Stomach (tissue), 19 donors: ENCODE measurements at regions of chr1 and their contacts with region 1.

Region 1: DNA sequence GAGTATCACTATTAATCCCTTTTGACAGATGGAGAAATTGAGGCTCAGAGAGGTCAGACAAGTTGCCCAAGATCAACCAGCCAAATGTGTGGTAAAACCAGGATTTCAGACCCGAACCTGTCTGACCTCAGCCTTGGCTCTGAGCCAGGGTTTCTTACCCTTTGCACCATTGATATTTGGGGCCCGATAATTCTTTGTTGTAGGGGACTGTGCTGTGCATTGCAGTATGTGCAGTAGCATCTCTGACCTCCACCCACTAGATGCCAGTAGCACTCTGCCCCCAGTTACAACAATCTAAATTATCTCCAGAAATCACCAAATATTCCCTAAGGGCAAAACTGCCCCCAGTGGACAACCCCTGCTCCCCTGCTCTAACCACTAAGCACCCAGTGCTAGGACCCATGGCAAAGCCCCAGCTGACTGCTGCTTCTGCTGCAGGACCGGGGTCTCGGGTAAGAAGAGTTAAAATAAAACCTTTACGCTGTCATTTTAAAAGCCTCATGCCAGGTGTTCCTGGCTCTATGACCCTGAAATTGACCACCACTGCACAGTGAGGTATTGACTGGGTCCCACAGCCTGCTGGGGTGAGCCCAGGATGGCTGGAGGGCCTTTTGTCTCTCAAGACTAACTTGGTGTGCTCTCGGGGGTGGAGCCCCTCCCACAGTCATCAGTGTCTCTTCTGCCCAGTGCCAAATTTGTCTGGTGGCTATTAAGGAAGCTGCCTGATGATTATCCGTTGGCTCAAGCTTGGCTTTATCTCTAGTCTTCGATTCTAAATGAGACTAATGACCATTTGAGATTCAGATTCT is 5.6 kb upstream of the MAN1C1 start:
- DNase-seq: no peak
- H3K4me3 ChIP-seq: no peak overlapping the region
- H3K27ac ChIP-seq: no peak overlapping the region
- H3K4me1 ChIP-seq: peaks cover 13 to 46% (median 30%) of the 10 kb centered on the region in 4 donors
- H3K27me3 ChIP-seq: no peaks in the 10 kb centered on the region
- CTCF ChIP-seq: peak in 1 of 7 experiments; percentile 6
- EP300 ChIP-seq: no peak
- POLR2A ChIP-seq: no peak

Region 2: DNA sequence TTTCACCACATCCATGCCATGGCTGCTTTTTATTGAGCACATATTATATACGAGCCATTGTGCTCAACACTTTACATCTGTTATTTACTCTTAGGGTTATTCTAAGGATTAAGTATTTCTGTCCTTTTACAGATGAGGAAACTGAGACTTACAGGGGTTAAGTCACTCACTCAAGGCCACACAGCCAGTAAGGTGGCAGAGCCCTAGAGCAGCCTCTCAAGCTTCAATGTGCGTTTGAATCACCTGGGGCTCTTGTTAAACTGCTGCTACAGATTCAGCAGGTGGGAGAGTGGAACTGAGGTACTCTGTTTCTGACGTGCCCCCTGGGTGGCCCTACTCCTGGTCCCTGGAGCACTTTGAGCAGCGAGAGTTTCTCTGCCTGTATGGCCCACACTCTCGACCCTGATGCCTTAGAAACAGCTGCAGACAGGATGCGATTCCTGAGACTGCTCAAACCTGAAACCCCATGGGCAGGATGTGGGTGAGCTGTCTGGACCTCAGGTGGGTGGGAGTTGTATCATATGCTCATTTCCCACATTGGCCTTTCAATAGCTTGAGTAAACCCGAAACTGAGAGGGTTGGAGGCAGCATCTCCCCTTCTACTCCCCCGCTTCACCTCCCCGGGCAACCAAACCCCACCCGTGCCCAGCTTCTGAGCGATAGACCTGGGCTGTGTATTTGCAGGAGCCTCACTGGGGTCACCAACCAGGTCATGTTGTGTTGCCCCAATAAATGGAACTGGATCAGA is 64.9 kb after region 1 on chr1:
- intact Hi-C with region 1: no loop called
- DNase-seq: peak; percentile 40 to 52
- H3K4me3 ChIP-seq: no peak overlapping the region
- H3K27ac ChIP-seq: no peak overlapping the region
- H3K4me1 ChIP-seq: peaks cover 0 to 19% (median 11%) of the 10 kb centered on the region in 4 donors
- H3K27me3 ChIP-seq: no peaks in the 10 kb centered on the region
- CTCF ChIP-seq: no peak
- EP300 ChIP-seq: no peak
- POLR2A ChIP-seq: no peak

Region 3: GRCh38 chr1:25805863-25806225 is 194.8 kb after region 1 on chr1:
- intact Hi-C with region 1: loop called (anchors 5 kb)
- DNase-seq: peak in 1 of 2 donors; percentile 61
- H3K4me3 ChIP-seq: no peak overlapping the region
- H3K27ac ChIP-seq: peak overlapping the region in 4 of 5 donors; percentile 48 to 78 (median 54)
- H3K4me1 ChIP-seq: peaks cover 27 to 96% (median 75%) of the 10 kb centered on the region in 4 donors
- H3K27me3 ChIP-seq: no peaks in the 10 kb centered on the region
- CTCF ChIP-seq: no peak
- EP300 ChIP-seq: no peak
- POLR2A ChIP-seq: no peak